Activated T-helper 2 cell treated with anti-CD3 and anti-CD28 coated beads, Interferon-gamma antibody, Interleukin-2, Interleukin-4, amounts not matched to agents 10 μg/mL and 5 μg/mL and 100 μg/mL, durations not matched to agents 14 hours and 24 hours and 36 hours (primary cell): ENCODE measurements at regions of chr6 and their contacts with region 1.

Region 1: DNA sequence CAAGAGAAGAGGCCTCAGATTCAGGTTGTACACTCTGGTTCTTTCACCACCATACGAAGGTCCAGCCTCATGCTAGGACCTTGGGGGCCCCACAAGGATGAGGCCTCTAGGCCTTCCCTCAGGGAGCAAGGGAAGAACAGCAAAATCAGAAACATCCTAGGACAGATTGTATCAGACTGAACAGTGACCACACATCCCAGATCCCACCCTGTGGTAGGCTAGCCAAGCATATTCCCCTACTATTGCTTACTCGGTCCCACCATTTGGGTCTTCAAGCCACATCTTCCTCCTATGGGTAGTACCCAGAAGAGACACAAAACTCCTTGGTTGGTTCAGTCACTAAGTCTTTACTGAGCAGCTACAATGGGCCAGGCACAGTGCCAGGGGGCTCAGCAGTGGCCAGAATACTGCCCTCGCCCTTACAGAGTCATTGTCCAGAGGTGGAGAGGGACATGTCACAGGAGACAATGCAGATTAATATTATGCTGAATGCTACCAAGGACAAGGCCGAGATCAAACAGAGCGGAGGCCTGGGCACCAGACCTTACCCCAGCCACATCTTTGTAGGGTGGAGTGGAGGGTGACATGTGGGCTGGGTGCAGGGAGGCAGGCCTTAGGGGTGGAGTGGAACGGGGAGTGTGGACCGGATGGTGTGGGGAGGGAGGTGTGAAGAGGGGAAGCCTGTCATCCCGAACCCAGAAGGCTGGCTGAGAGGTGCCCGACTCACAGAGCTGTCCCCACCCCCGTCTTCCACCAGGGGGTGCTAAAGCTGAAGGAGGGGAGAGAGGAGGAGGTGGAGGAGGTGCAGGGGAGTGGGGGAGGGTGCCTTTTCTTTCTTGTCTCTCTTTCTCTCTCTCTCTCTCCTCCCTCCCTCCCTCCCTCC is 6.8 kb upstream of the MAPK13 start:
- DNase-seq: peak; percentile 86
- H3K4me3 Mint-ChIP-seq: no peak overlapping the region
- H3K27ac Mint-ChIP-seq: peak overlapping the region; percentile 36
- H3K4me1 Mint-ChIP-seq: peaks cover 59% of the 10 kb centered on the region
- H3K27me3 Mint-ChIP-seq: no peaks in the 10 kb centered on the region

Region 2: GRCh38 chr6:36196880-36197548 is 73.5 kb after region 1 on chr6:
- intact Hi-C with region 1: loop called (anchors 2 kb)
- DNase-seq: peak; percentile 99
- H3K4me3 Mint-ChIP-seq: peak overlapping the region; percentile 85
- H3K27ac Mint-ChIP-seq: peak overlapping the region; percentile 88
- H3K4me1 Mint-ChIP-seq: peaks cover 24% of the 10 kb centered on the region
- H3K27me3 Mint-ChIP-seq: peaks cover under 1% of the 10 kb centered on the region

Region 3: GRCh38 chr6:36241728-36242127 is 118.2 kb after region 1 on chr6:
- intact Hi-C with region 1: loop called (anchors 5 kb)
- DNase-seq: no peak
- H3K4me3 Mint-ChIP-seq: no peak overlapping the region
- H3K27ac Mint-ChIP-seq: no peak overlapping the region
- H3K4me1 Mint-ChIP-seq: peaks cover 13% of the 10 kb centered on the region
- H3K27me3 Mint-ChIP-seq: peaks cover 24% of the 10 kb centered on the region

Region 4: GRCh38 chr6:36302227-36302976 is 178.9 kb after region 1 on chr6:
- intact Hi-C with region 1: loop called (anchors 5 kb)
- DNase-seq: peak; percentile 84
- H3K4me3 Mint-ChIP-seq: no peak overlapping the region
- H3K27ac Mint-ChIP-seq: no peak overlapping the region
- H3K4me1 Mint-ChIP-seq: peaks cover 5% of the 10 kb centered on the region
- H3K27me3 Mint-ChIP-seq: peaks cover 23% of the 10 kb centered on the region

Region 5: DNA sequence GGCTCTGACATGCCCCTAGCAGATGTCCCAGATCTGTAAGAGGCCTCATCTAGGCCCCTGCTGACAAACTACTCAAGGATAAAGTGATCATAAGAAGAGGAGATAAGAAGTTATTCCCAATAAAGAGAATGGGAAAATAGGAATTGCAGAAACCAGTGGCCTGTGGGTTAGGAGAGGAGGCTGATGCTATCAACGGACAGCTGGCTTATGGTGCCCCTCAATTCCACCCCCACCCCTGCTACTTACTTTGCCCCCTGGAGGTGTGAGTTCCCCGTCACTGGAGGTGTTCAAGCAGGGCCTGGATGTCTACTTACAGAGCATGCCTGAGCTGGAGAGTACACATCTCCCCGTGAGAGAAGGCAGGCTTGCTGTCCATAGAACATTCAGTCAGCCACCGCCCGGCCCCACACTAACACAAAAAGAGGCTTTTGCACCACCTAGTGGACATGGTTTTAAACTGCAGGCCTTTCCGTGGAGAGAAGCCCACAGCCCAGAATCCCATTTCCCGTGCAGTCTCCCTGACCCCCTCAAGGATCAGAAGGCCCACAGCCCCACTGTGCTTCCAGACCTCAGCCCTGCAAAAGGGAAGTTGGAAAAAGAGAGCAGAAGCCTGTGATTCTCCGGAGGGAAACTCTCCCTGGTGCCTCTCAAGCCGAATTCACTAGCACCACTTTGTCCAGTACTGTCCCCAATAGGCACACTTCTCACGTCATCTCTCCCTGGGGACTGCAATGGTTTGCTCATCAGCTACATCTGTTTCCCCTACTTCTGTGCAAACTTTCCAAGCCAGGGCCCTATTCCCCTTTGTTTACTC is 236.9 kb after region 1 on chr6:
- intact Hi-C with region 1: loop called (anchors 5 kb)
- DNase-seq: peak; percentile 59
- H3K4me3 Mint-ChIP-seq: no peak overlapping the region
- H3K27ac Mint-ChIP-seq: no peak overlapping the region
- H3K4me1 Mint-ChIP-seq: peaks cover 38% of the 10 kb centered on the region
- H3K27me3 Mint-ChIP-seq: peaks cover 25% of the 10 kb centered on the region